Activated CD4-positive, alpha-beta T cell treated with anti-CD3 and anti-CD28 coated beads for 36 hours (primary cell): ENCODE measurements at regions of chr9 and their contacts with region 1.

Region 1: GRCh38 chr9:137223078-137223970 is 1.3 kb upstream of the RNF208 start:
- DNase-seq: peak; percentile 99
- ATAC-seq: peak; percentile 90
- H3K4me3 Mint-ChIP-seq: peak overlapping the region; percentile 80
- H3K27ac Mint-ChIP-seq: peak overlapping the region; percentile 83
- H3K4me1 Mint-ChIP-seq: peaks cover 8% of the 10 kb centered on the region
- H3K27me3 Mint-ChIP-seq: peaks cover 2% of the 10 kb centered on the region

Region 2: GRCh38 chr9:136991993-136992818 is 231.1 kb before region 1 on chr9 and contains the start of gene PAXX:
- CTCF ChIA-PET with region 1: no interaction called
- POLR2A ChIA-PET with region 1: no interaction called
- intact Hi-C with region 1: loop called in 1 of 2 experiments (anchors 1 kb)
- DNase-seq: peak; percentile 98
- ATAC-seq: peak; percentile 95
- H3K4me3 Mint-ChIP-seq: peak within 1 kb of the TSS; percentile 81
- H3K27ac Mint-ChIP-seq: peak within 1 kb of the TSS; percentile 70
- H3K4me1 Mint-ChIP-seq: peaks cover 22% of the 10 kb centered on the region
- H3K27me3 Mint-ChIP-seq: peaks cover 4% of the 10 kb centered on the region
- total RNA-seq, gene PAXX: 52.7 to 67.1 TPM

Region 3: DNA sequence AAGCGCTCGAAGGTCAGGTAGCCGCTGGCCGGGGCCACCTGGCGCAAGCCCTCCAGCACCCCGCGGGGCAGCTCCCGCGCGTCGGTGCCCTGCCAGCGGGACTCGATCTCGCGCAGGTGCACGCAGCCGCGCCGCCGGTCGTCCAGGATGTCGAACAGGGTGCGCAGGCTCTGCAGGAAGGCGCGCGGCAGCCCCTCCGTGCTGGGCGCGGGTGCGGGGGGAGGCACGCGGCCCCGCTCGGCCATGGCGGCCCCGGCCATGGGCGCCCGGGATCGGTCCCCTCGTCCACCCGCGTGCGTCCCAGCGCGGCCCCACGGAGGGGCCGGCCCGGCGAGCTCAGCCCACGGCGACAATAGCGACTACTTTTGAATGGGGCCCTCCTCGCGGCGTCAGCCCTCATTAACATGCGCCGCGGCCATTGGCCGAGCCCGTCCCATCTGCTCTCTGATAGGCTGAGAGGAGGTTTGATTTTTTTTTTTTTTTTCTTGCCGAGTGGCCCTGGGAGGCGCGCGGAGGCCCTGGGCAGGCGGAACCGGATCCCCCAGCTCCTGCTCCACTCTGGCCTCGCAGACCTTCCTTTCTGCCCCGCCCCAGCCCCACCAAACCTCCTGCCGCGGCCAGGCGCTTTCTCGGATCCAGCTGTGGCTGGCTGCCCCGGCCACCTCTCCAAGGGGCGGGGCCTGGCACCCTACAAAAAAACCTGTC is 153.0 kb before region 1 on chr9 and contains the start of gene SAPCD2:
- CTCF ChIA-PET with region 1: no interaction called
- POLR2A ChIA-PET with region 1: no interaction called
- intact Hi-C with region 1: loop called in 1 of 2 experiments (anchors 1 kb)
- DNase-seq: peak; percentile 92
- ATAC-seq: peak; percentile 91
- H3K4me3 Mint-ChIP-seq: peak within 1 kb of the TSS; percentile 71
- H3K27ac Mint-ChIP-seq: peak within 1 kb of the TSS; percentile 71
- H3K4me1 Mint-ChIP-seq: peaks cover 9% of the 10 kb centered on the region
- H3K27me3 Mint-ChIP-seq: no peaks in the 10 kb centered on the region
- total RNA-seq, gene SAPCD2: 6.4 to 8.8 TPM

Region 4: GRCh38 chr9:137129456-137130175 is 93.7 kb before region 1 on chr9:
- CTCF ChIA-PET with region 1: interaction called, 13 read pairs
- POLR2A ChIA-PET with region 1: interaction called, 5 read pairs
- intact Hi-C with region 1: loop called in 1 of 2 experiments (anchors 1 kb)
- DNase-seq: peak; percentile 95
- ATAC-seq: peak; percentile 96
- H3K4me3 Mint-ChIP-seq: peak overlapping the region; percentile 89
- H3K27ac Mint-ChIP-seq: peak overlapping the region; percentile 70
- H3K4me1 Mint-ChIP-seq: peaks cover 21% of the 10 kb centered on the region
- H3K27me3 Mint-ChIP-seq: peaks cover 5% of the 10 kb centered on the region

Region 5: DNA sequence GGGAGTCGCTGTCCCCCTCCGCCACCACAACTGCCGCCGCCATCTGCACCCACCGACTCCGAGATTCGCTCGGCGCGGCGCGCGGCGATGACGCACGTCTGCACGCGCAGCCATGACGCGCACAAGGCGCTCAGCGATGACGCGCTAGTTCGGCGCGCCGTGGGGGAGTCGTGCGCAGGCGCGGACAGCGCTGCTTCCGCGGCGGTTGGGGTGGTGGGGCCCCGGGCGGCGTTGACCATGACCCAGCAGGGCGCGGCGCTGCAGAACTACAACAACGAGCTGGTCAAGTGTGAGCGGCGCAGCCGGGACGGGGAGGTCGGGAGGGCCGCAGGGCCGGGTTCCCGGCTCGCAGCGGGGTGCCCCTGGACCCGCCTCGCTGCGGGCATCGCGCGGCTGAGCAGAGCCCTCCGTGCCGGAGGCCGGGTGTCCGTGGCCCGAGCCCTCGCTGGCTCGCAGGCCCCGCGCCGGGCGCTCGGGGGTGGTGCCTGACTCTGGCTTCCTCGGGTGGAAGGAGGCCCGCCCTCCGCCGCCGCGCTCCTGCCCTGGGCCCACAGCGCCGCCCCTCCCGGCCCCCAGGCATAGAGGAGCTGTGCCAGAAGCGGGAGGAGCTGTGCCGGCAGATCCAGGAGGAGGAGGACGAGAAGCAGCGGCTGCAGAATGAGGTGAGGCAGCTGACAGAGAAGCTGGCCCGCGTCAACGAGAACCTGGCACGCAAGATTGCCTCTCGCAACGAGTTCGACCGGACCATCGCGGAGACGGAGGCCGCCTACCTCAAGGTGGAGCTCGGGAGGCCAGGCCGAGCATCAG is 34.6 kb before region 1 on chr9 and contains the starts of genes ANAPC2 and SSNA1:
- CTCF ChIA-PET with region 1: interaction called, 3 read pairs
- POLR2A ChIA-PET with region 1: no interaction called
- intact Hi-C with region 1: loop called (anchors 1 to 5 kb)
- DNase-seq: peak; percentile 96
- ATAC-seq: peak; percentile 85
- H3K4me3 Mint-ChIP-seq: peak within 1 kb of the TSS; percentile 91
- H3K27ac Mint-ChIP-seq: peak within 1 kb of the TSS; percentile 88
- H3K4me1 Mint-ChIP-seq: peaks cover 33% of the 10 kb centered on the region
- H3K27me3 Mint-ChIP-seq: no peaks in the 10 kb centered on the region
- total RNA-seq, gene ANAPC2: 30.8 to 38.4 TPM
- total RNA-seq, gene SSNA1: 53.6 to 58.6 TPM

Region 6: GRCh38 chr9:137254624-137255447 is 31.5 kb after region 1 on chr9 and contains the start of gene NELFB:
- CTCF ChIA-PET with region 1: no interaction called
- POLR2A ChIA-PET with region 1: no interaction called
- intact Hi-C with region 1: loop called in 1 of 2 experiments (anchors 1 kb)
- DNase-seq: peak; percentile 97
- ATAC-seq: peak; percentile 94
- H3K4me3 Mint-ChIP-seq: peak within 1 kb of the TSS; percentile 87
- H3K27ac Mint-ChIP-seq: peak within 1 kb of the TSS; percentile 81
- H3K4me1 Mint-ChIP-seq: peaks cover 18% of the 10 kb centered on the region
- H3K27me3 Mint-ChIP-seq: no peaks in the 10 kb centered on the region
- total RNA-seq, gene NELFB: 41.4 to 54.1 TPM